Caco-2 (cell line): ENCODE measurements at regions of chr9 and their contacts with region 1.

Region 1: DNA sequence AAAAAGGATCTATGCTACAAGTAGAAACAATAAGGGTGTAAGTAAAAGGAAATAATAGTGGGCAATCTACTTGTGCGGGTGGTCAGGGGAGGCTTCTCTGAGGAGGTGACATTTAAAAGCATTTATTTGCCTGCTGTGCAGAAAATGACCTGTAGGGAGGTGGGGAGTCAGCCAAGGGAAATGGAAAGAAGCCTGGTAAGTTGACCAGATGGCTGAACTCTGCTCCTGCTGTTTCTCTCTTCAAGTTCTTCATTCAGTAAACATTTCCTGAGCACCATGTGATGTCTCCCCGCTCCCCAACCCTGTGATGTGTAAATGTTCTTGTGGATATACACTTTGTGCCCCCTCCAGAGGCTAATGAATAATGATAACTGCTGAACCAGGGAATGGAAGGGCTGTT is 9.9 kb upstream of the SPIN1 start:
- DNase-seq: no peak
- H3K4me3 ChIP-seq: no peak overlapping the region
- H3K4me3 Mint-ChIP-seq: no peak overlapping the region
- H3K27ac Mint-ChIP-seq: no peak overlapping the region
- H3K4me1 ChIP-seq: no peaks in the 10 kb centered on the region
- H3K4me1 Mint-ChIP-seq: no peaks in the 10 kb centered on the region
- H3K27me3 ChIP-seq: no peaks in the 10 kb centered on the region
- H3K27me3 Mint-ChIP-seq: no peaks in the 10 kb centered on the region
- CTCF ChIP-seq: no peak

Region 2: DNA sequence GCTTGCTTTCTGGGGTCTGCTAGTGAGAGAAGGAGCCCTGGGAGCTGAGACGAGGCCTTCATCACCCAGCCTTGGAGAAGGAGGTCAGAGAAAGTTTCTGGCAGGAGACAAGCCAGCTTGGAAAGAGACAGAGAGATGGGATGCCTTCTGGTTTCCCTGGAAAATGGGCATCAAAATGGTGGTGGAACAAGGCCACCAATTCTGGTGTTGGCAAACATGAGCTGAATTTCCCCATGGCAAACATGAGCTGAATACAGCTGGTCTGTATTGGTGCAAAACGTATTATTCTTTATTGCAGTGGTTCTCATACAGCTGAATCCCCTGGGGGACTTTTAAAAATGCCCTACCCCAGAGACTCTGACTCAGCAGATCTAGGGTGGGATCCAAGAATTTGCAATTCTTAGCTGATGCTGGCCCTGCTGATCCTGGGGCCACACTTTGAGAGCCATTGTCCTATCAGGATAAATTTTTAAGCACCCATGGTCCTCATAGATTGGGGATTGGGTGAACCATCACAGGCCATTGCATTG is 573.8 kb after region 1 on chr9:
- CTCF ChIA-PET with region 1: no interaction called
- POLR2A ChIA-PET with region 1: interaction called, 12 read pairs
- intact Hi-C with region 1: no loop called
- DNase-seq: no peak
- H3K4me3 ChIP-seq: no peak overlapping the region
- H3K4me3 Mint-ChIP-seq: no peak overlapping the region
- H3K27ac Mint-ChIP-seq: no peak overlapping the region
- H3K4me1 ChIP-seq: peaks cover 8% of the 10 kb centered on the region
- H3K4me1 Mint-ChIP-seq: peaks cover 7% of the 10 kb centered on the region
- H3K27me3 ChIP-seq: no peaks in the 10 kb centered on the region
- H3K27me3 Mint-ChIP-seq: no peaks in the 10 kb centered on the region
- CTCF ChIP-seq: no peak